ENCODE measurements at regions of chr19 and their contacts with region 1.

Region 1: GRCh38 chr19:12139885-12140547 is at the start of gene ZNF20:
- DNase-seq: peak; percentile 92
- H3K4me3 Mint-ChIP-seq: peak within 1 kb of the TSS; percentile 92
- H3K27ac Mint-ChIP-seq: peak within 1 kb of the TSS; percentile 75
- H3K4me1 Mint-ChIP-seq: peaks cover 31% of the 10 kb centered on the region
- H3K27me3 Mint-ChIP-seq: no peaks in the 10 kb centered on the region
- total RNA-seq, gene ZNF20: 5.3 to 5.8 TPM

Region 2: GRCh38 chr19:11964858-11965645 is 175.0 kb before region 1 on chr19 and contains the start of gene ZNF763:
- CTCF ChIA-PET with region 1: interaction called, 10 read pairs
- POLR2A ChIA-PET with region 1: interaction called, 4 read pairs
- DNase-seq: peak; percentile 91
- H3K4me3 Mint-ChIP-seq: peak within 1 kb of the TSS; percentile 85
- H3K27ac Mint-ChIP-seq: peak within 1 kb of the TSS; percentile 75
- H3K4me1 Mint-ChIP-seq: peaks cover 22% of the 10 kb centered on the region
- H3K27me3 Mint-ChIP-seq: no peaks in the 10 kb centered on the region
- total RNA-seq, gene ZNF763: 1.4 to 2.2 TPM

Region 3: GRCh38 chr19:12064590-12065538 is 75.2 kb before region 1 on chr19 and contains the start of gene ZNF844:
- CTCF ChIA-PET with region 1: interaction called, 20 read pairs
- POLR2A ChIA-PET with region 1: interaction called, 4 read pairs
- DNase-seq: peak; percentile 59
- H3K4me3 Mint-ChIP-seq: peak within 1 kb of the TSS; percentile 65
- H3K27ac Mint-ChIP-seq: no peak within 1 kb of the TSS
- H3K4me1 Mint-ChIP-seq: peaks cover 4% of the 10 kb centered on the region
- H3K27me3 Mint-ChIP-seq: no peaks in the 10 kb centered on the region
- total RNA-seq, gene ZNF844: 1.4 to 1.6 TPM

Region 4: DNA sequence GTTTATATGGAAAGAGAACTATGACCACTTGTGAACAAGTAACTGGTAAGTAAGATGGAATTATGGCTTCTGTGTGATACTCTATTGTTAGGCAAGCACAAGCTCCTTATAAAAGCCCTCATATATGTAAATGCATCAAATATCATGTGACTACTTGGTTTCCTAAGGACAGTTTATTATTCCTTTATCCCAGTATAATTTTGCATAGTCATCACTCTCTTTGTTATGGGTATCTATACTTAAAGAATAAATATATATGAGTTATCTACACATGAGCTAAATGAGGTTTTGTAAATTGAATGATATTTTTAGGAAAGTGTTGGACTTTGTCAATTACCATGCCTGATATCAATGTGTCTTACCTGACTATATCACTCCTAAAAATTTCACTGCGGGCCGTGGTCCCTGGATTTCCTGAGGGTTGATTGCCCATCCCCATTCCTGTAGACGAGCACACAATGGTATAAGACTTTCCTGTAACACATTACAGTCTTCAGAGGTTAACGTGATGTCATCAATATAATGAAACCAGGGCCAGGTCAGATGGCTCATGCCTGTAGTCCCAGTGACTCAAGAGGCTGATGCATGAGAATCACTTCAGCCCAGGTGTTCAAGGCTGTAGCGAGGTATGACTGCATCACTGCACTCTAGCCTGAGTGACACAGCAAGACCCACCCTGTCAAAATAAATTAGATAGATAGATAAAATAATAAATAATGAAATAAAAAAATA is 54.8 kb before region 1 on chr19:
- CTCF ChIA-PET with region 1: no interaction called
- POLR2A ChIA-PET with region 1: no interaction called
- DNase-seq: no peak
- H3K4me3 Mint-ChIP-seq: no peak overlapping the region
- H3K27ac Mint-ChIP-seq: no peak overlapping the region
- H3K4me1 Mint-ChIP-seq: no peaks in the 10 kb centered on the region
- H3K27me3 Mint-ChIP-seq: no peaks in the 10 kb centered on the region

Region 5: DNA sequence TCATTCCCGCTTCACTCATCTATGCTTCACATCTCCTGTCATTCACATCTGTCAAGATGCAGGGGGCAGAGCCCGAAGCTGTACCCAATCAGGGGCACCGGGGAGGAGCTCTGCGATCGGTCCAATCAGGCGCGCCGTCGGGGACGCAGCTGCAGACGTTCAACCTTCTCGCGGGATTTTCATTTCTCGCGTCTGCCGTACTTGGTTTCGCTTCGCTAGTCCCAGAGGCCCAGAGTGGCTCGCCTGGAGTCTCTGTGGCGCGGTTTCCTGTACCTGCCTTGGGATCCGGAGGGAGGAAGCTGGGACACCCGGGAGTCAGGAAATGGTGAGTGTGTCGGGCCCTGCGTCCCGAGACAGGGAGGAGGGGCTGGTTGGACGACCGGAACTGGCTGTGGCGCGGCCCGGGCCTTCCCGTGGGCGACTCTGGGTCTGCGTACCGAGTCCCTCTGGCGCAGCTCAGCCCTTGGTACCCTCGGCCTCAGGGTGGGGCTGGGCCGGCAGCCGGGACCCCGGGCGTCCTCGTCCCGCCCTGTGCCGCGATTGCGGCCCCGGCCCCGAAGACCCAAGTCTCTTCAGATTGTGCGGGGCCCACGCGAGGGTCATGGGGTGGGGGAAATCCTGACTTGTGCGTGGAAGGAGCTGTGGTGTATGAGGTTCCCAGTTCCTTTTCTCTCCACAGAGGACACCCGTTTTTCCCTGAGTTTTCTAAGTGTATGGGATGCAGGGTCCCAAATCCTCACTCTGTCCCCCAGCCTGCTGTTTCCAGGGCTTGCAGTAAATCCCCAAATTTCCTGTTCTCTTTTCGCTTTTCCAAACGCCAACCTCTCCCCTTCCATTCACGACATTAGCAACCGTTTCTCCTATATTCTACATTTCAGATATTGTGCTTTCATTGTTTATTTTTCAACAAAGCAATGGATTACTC is 23.1 kb after region 1 on chr19 and contains the start of gene ZNF136:
- CTCF ChIA-PET with region 1: interaction called, 6 read pairs
- POLR2A ChIA-PET with region 1: interaction called, 11 read pairs
- DNase-seq: peak; percentile 96
- H3K4me3 Mint-ChIP-seq: peak within 1 kb of the TSS; percentile 90
- H3K27ac Mint-ChIP-seq: peak within 1 kb of the TSS; percentile 90
- H3K4me1 Mint-ChIP-seq: peaks cover 33% of the 10 kb centered on the region
- H3K27me3 Mint-ChIP-seq: no peaks in the 10 kb centered on the region
- total RNA-seq, gene ZNF136: 11.0 TPM